ENCODE measurements at regions of chr5 and their contacts with region 1.

Region 1: GRCh38 chr5:83069096-83069799 is 7.9 kb downstream of the TMEM167A start:
- DNase-seq: peak; percentile 40
- ATAC-seq: peak; percentile 29; the same call in 1 of the 2 replicates
- H3K4me3 ChIP-seq: no peak overlapping the region
- H3K27ac ChIP-seq: no peak overlapping the region
- H3K4me1 ChIP-seq: peaks cover 6% of the 10 kb centered on the region; the same call in 1 of the 2 replicates
- H3K27me3 ChIP-seq: no peaks in the 10 kb centered on the region
- CTCF ChIP-seq: no peak
- POLR2A ChIP-seq: no peak
- RAD21 ChIP-seq: no peak

Region 2: GRCh38 chr5:83340511-83340918 is 271.3 kb after region 1 on chr5:
- CTCF ChIA-PET with region 1: no interaction called
- POLR2A ChIA-PET with region 1: interaction called, 19 read pairs
- dilution Hi-C with region 1: no loop called
- in situ Hi-C with region 1: no loop called
- intact Hi-C with region 1: no loop called
- DNase-seq: no peak
- ATAC-seq: no peak
- H3K4me3 ChIP-seq: no peak overlapping the region
- H3K27ac ChIP-seq: no peak overlapping the region
- H3K4me1 ChIP-seq: no peaks in the 10 kb centered on the region
- H3K27me3 ChIP-seq: no peaks in the 10 kb centered on the region
- CTCF ChIP-seq: no peak
- POLR2A ChIP-seq: no peak
- RAD21 ChIP-seq: no peak